ENCODE measurements at regions of chr10 and their contacts with region 1.

Region 1: GRCh38 chr10:23314835-23315239 is 29.8 kb downstream of the C10orf67 start:
- H3K4me3 ChIP-seq: no peak overlapping the region
- H3K27ac ChIP-seq: no peak overlapping the region
- H3K4me1 ChIP-seq: no peaks in the 10 kb centered on the region
- CTCF ChIP-seq: no peak

Region 2: DNA sequence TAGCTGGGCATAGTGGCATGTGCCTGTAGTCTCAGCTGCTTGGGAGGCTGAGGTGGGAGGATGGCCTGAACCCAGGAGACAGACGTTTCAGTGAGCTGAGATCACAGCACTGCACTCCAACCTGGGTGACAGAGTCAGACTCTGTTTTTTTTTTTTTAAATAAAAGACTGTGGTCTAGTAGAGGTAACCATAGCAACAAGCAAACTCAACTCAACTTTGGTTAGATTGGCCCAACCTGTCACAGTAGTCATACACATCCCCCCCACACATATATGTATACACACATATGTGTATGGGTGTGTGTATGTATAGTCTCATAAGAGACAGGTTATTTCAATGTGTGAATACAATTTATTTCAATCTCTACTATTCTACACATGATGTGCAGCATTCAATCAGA is 57.2 kb before region 1 on chr10:
- CTCF ChIA-PET with region 1: no interaction called
- POLR2A ChIA-PET with region 1: no interaction called
- H3K4me3 ChIP-seq: no peak overlapping the region
- H3K27ac ChIP-seq: no peak overlapping the region
- H3K4me1 ChIP-seq: no peaks in the 10 kb centered on the region
- CTCF ChIP-seq: no peak

Region 3: DNA sequence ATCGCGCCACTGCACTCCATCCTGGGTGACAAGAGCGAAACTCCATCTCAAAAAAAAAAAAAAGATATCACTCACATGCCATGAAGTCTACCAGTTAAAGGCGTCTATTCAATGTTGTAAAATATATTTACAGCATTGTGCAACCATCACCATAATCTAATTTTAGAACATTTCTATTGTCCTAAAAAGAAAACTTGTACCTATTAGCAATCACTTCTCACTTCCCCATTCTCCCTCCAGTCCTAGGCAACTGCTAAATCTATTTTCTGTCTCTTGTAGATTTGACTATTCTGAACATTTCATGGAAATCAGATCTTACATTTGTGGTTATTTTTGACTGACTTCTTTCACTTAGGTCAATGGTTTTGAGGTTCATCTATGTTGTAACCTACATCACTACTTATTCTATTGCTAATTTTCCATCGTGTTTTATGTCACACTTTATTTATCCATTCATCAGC is 98.8 kb after region 1 on chr10:
- CTCF ChIA-PET with region 1: no interaction called
- POLR2A ChIA-PET with region 1: no interaction called
- H3K4me3 ChIP-seq: no peak overlapping the region
- H3K27ac ChIP-seq: no peak overlapping the region
- H3K4me1 ChIP-seq: peaks cover 6% of the 10 kb centered on the region
- CTCF ChIP-seq: no peak

Region 4: GRCh38 chr10:23516530-23516929 is 201.7 kb after region 1 on chr10:
- CTCF ChIA-PET with region 1: interaction called, 10 read pairs
- POLR2A ChIA-PET with region 1: no interaction called
- H3K4me3 ChIP-seq: no peak overlapping the region
- H3K27ac ChIP-seq: no peak overlapping the region
- H3K4me1 ChIP-seq: no peaks in the 10 kb centered on the region
- CTCF ChIP-seq: no peak

Region 5: DNA sequence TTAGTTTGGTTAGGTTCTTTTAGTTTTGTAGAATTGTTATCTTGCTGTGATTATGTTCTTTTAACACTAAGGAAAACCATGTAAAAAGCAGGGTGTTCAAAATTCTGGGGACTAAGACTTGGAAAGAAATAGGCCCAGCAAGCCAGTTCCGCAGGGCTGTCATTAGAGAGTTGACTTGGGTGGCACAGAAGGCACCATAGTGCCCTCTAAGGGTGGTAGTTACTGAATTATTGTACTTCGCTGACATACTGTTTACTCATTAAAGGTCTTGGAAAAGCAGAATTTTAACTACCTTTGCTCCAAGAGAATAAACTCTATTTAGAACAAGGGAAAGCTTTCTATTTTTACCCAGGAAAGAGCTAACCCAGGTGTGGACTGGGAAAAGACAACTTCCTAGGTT is 210.6 kb after region 1 on chr10:
- CTCF ChIA-PET with region 1: interaction called, 29 read pairs
- POLR2A ChIA-PET with region 1: no interaction called
- H3K4me3 ChIP-seq: no peak overlapping the region
- H3K27ac ChIP-seq: no peak overlapping the region
- H3K4me1 ChIP-seq: no peaks in the 10 kb centered on the region
- CTCF ChIP-seq: no peak

Region 6: GRCh38 chr10:23702977-23703414 is 388.2 kb after region 1 on chr10:
- CTCF ChIA-PET with region 1: interaction called, 13 read pairs
- POLR2A ChIA-PET with region 1: no interaction called
- H3K4me3 ChIP-seq: no peak overlapping the region
- H3K27ac ChIP-seq: no peak overlapping the region
- H3K4me1 ChIP-seq: no peaks in the 10 kb centered on the region
- CTCF ChIP-seq: peak; percentile 66

Measured in HEK293 (cell line).